ENCODE measurements at regions of chr10 and their contacts with region 1.

Region 1: GRCh38 chr10:7756360-7756992 is 31.3 kb downstream of the KIN start:
- DNase-seq: no peak
- H3K4me3 ChIP-seq: no peak overlapping the region
- H3K27ac ChIP-seq: no peak overlapping the region
- H3K4me1 ChIP-seq: no peaks in the 10 kb centered on the region
- H3K27me3 ChIP-seq: no peaks in the 10 kb centered on the region
- CTCF ChIP-seq: peak; percentile 49 to 70 (median 68)
- EP300 ChIP-seq: no peak
- POLR2A ChIP-seq: no peak
- RAD21 ChIP-seq: peak; percentile 46 to 62

Region 2: DNA sequence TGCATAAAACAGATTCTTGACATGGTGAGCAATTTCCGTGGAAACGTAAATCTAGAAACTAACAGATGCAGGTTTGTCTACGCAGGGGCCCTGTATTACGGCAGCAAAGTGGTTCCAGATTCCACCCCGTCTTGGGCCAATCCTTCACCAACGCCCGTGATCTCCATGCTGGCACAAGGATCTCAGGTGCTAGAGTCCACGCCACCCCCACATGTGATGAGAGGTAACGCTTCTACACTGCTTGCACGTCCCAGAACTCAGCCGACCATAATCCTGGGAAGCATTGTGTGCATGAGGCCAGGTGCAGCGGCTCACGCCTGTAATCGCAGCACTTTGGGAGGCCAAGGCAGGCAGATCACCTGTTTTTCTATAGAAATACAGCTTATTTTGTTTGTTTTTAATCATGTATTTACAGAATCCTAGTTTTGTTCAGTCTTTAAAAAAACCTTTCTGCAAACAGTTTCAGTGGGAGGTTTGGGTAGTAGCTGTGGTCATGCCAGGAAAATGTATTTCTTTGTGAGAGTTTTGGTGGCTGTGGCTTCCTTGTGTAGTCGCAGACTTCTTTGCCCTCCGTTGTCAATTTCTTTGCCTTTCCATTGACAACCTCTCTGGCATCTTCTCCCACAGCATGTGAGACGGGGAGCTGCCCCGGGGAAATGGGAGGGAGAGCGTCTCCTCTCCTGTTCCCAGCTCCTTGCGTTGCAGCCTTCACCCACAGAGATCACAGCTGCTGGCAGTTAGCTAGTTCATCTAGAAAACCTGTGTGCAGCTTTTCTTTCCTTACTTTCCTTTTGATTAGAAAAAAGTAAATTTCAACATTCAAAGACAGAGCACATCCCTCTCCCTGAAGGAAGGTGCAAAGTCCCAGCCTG is 17.7 kb before region 1 on chr10:
- CTCF ChIA-PET with region 1: interaction called, 14 read pairs
- POLR2A ChIA-PET with region 1: no interaction called
- DNase-seq: no peak
- H3K4me3 ChIP-seq: no peak overlapping the region
- H3K27ac ChIP-seq: no peak overlapping the region
- H3K4me1 ChIP-seq: no peaks in the 10 kb centered on the region
- H3K27me3 ChIP-seq: no peaks in the 10 kb centered on the region
- CTCF ChIP-seq: no peak
- EP300 ChIP-seq: no peak
- POLR2A ChIP-seq: no peak
- RAD21 ChIP-seq: no peak

Region 3: GRCh38 chr10:7802216-7803005 is 45.9 kb after region 1 on chr10:
- CTCF ChIA-PET with region 1: no interaction called
- POLR2A ChIA-PET with region 1: no interaction called
- DNase-seq: no peak
- H3K4me3 ChIP-seq: no peak overlapping the region
- H3K27ac ChIP-seq: no peak overlapping the region
- H3K4me1 ChIP-seq: no peaks in the 10 kb centered on the region
- H3K27me3 ChIP-seq: peaks cover 0 to 1% (median 0%) of the 10 kb centered on the region in 4 experiments; a peak in 1 of 7 replicates
- CTCF ChIP-seq: no peak
- EP300 ChIP-seq: no peak
- POLR2A ChIP-seq: no peak
- RAD21 ChIP-seq: no peak

Measured in H1 (cell line).